ENCODE measurements at regions of chr3 and their contacts with region 1.

Region 1: DNA sequence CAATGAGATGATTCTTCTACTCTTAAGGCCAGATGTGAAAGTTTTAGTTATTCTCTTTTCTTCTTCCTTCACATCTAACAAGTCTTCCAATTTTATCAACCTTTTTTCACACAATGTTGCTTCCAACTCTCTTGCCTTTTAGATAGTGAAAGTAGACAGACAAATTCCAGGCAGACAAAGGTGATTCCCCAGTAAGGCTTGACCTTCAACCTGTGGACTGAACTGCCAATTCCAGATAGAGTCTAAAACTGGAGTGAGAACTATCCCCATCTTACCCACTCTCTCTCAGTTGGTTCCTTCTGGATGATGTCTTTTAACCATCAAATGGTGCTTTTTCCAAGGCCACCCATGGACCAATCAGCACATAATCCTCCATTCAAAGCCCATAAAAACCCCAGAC is 159.0 kb downstream of the NSUN3 start:
- DNase-seq: no peak
- CTCF ChIP-seq: no peak

Region 2: GRCh38 chr3:94083261-94083660 is 138.6 kb before region 1 on chr3:
- CTCF ChIA-PET with region 1: no interaction called
- POLR2A ChIA-PET with region 1: no interaction called
- DNase-seq: no peak
- CTCF ChIP-seq: no peak

Region 3: DNA sequence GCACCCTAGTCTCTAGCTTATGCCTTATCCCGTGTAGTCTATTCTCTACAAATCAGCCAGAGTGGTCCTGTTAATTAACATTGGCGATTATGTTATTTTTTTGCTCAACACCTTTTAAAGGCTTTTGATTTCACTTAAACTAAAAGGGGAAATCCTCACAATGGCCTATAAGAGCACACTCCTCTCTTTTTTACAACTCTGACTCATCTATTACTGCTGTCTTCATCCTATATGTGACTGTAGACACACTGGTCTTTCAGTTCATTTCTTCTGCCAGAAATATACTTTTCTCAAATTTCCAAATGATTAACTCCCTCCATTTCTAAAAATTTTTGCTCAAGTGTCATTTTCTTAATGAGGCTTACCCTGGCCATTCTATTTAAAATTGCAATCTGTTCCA is 15.5 kb before region 1 on chr3:
- CTCF ChIA-PET with region 1: no interaction called
- POLR2A ChIA-PET with region 1: no interaction called
- DNase-seq: no peak
- CTCF ChIP-seq: no peak

Region 4: DNA sequence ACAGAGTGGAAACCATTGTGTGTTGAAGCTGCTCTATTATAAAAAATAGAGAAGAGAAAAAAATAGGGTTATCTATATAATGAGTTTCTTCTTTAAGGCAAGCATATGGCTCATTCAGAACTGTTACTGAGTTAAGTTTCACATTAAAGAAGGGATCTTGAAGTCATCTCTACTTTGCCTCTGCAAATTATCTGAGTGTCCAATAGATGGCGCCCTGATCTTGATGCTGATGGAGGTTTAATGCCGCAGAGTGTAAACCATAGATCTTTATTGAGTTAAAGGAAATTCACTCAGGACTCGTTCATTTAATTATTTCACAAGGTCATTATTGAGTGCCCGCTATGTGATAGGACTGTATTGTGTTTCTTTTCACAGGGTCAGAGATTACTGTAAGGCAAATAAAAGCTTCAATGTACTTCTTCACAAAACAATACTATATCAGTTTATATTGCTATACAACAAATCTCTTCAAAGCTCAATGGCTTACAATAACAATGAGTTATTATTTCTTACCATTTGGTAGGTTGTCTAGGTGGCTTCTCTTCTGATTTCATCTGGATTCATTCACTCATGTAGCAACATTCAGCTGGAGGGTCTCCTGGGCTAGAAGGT is 12.5 kb after region 1 on chr3:
- CTCF ChIA-PET with region 1: interaction called, 10 read pairs
- POLR2A ChIA-PET with region 1: no interaction called
- DNase-seq: peak; percentile 23
- CTCF ChIP-seq: peak; percentile 58

Measured in GM10248 (cell line).